CD4-positive, alpha-beta memory T cell (primary cell): ENCODE measurements at regions of chr9 and their contacts with region 1.

Region 1: GRCh38 chr9:34989003-34989945 is at the start of gene DNAJB5:
- DNase-seq: peak; percentile 96 to 99 (median 98)
- H3K4me3 ChIP-seq: peak within 1 kb of the TSS; percentile 47 to 83
- H3K4me3 Mint-ChIP-seq: peak within 1 kb of the TSS; percentile 90 to 99 (median 94)
- H3K27ac ChIP-seq: peak within 1 kb of the TSS; percentile 69
- H3K27ac Mint-ChIP-seq: peak within 1 kb of the TSS; percentile 84 to 95 (median 94)
- H3K4me1 ChIP-seq: peaks cover 42% of the 10 kb centered on the region
- H3K4me1 Mint-ChIP-seq: peaks cover 28 to 62% (median 48%) of the 10 kb centered on the region in 4 donors
- H3K27me3 ChIP-seq: no peaks in the 10 kb centered on the region
- H3K27me3 Mint-ChIP-seq: no peaks in the 10 kb centered on the region
- total RNA-seq, gene DNAJB5: 0.73 to 0.97 TPM

Region 2: DNA sequence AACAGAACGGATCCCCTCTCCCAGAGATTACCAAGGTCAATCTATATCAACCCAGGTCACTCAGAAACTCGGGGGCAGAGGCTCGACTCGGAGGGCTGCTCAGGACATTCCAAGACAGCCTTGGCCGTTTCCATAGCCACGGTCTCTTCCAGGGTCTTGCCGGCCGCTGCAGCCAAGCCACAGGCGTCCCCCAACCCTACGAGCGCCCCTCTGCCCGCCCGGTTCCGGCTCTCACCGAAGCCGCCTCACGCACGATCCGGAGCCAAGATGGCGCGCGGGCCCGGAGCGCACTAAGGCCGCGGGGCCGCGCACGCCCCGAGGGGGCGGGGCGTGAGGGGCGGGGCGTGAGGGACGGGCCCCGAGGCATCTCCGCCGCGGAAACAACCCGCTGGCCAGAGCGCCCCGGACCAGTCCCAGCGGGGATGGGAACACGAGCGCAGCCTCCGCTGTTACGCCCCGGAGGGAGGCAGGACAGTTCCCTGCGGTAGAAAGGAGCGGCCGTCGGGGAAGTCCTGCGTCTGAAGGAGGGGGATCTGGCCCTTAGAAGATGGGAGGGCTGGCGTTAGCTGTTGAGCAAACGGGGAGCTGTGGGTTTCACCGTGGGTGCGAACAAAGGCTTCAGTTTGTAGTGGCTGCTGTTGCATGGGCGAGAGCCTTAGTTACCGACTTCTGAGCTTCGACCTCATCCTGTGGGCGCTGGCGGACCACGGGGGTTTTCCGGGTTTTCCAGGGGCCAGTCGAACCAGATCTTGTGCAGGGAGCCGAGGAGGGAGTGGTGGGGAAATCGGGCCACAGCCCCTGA is 377.2 kb before region 1 on chr9 and contains the start of gene RPP25L:
- CTCF ChIA-PET with region 1: no interaction called
- POLR2A ChIA-PET with region 1: no interaction called
- intact Hi-C with region 1: loop called (anchors 2 kb)
- DNase-seq: peak; percentile 83 to 89 (median 86)
- H3K4me3 ChIP-seq: peak within 1 kb of the TSS; percentile 81 to 88
- H3K4me3 Mint-ChIP-seq: peak within 1 kb of the TSS; percentile 87 to 99 (median 92)
- H3K27ac ChIP-seq: peak within 1 kb of the TSS; percentile 71
- H3K27ac Mint-ChIP-seq: peak within 1 kb of the TSS; percentile 83 to 97 (median 96)
- H3K4me1 ChIP-seq: peaks cover 19% of the 10 kb centered on the region
- H3K4me1 Mint-ChIP-seq: peaks cover 7 to 35% (median 25%) of the 10 kb centered on the region in 4 donors
- H3K27me3 ChIP-seq: no peaks in the 10 kb centered on the region
- H3K27me3 Mint-ChIP-seq: no peaks in the 10 kb centered on the region
- total RNA-seq, gene RPP25L: 28.5 to 28.9 TPM

Region 3: GRCh38 chr9:34637356-34638137 is 351.7 kb before region 1 on chr9 and contains the start of gene SIGMAR1:
- CTCF ChIA-PET with region 1: no interaction called
- POLR2A ChIA-PET with region 1: no interaction called
- intact Hi-C with region 1: no loop called
- DNase-seq: peak; percentile 91 to 97 (median 94)
- H3K4me3 ChIP-seq: peak within 1 kb of the TSS; percentile 74 to 84
- H3K4me3 Mint-ChIP-seq: peak within 1 kb of the TSS; percentile 87 to 92 (median 91)
- H3K27ac ChIP-seq: peak within 1 kb of the TSS; percentile 78
- H3K27ac Mint-ChIP-seq: peak within 1 kb of the TSS; percentile 93 to 97 (median 95)
- H3K4me1 ChIP-seq: peaks cover 38% of the 10 kb centered on the region
- H3K4me1 Mint-ChIP-seq: peaks cover 22 to 51% (median 34%) of the 10 kb centered on the region in 4 donors
- H3K27me3 ChIP-seq: no peaks in the 10 kb centered on the region
- H3K27me3 Mint-ChIP-seq: no peaks in the 10 kb centered on the region
- total RNA-seq, gene SIGMAR1: 56.1 to 59.5 TPM

Region 4: GRCh38 chr9:34899535-34900158 is 89.6 kb before region 1 on chr9:
- CTCF ChIA-PET with region 1: interaction called, 64 read pairs
- POLR2A ChIA-PET with region 1: interaction called, 10 read pairs
- intact Hi-C with region 1: loop called (anchors 1 kb)
- DNase-seq: peak; percentile 73 to 78 (median 77)
- H3K4me3 ChIP-seq: no peak overlapping the region
- H3K4me3 Mint-ChIP-seq: no peak overlapping the region
- H3K27ac ChIP-seq: no peak overlapping the region
- H3K27ac Mint-ChIP-seq: no peak overlapping the region
- H3K4me1 ChIP-seq: no peaks in the 10 kb centered on the region
- H3K4me1 Mint-ChIP-seq: no peaks in the 10 kb centered on the region
- H3K27me3 ChIP-seq: no peaks in the 10 kb centered on the region
- H3K27me3 Mint-ChIP-seq: peaks cover 29 to 30% of the 10 kb centered on the region in 2 donors

Region 5: GRCh38 chr9:35071814-35072460 is 82.7 kb after region 1 on chr9:
- CTCF ChIA-PET with region 1: interaction called, 3 read pairs
- POLR2A ChIA-PET with region 1: interaction called, 19 read pairs
- intact Hi-C with region 1: loop called (anchors 1 kb)
- DNase-seq: peak; percentile 72 to 80 (median 79)
- H3K4me3 ChIP-seq: peak overlapping the region; percentile 82 to 83
- H3K4me3 Mint-ChIP-seq: peak overlapping the region; percentile 81 to 95 (median 92)
- H3K27ac ChIP-seq: peak overlapping the region; percentile 94
- H3K27ac Mint-ChIP-seq: peak overlapping the region; percentile 81 to 100 (median 97)
- H3K4me1 ChIP-seq: peaks cover 52% of the 10 kb centered on the region
- H3K4me1 Mint-ChIP-seq: peaks cover 41 to 59% (median 51%) of the 10 kb centered on the region in 4 donors
- H3K27me3 ChIP-seq: no peaks in the 10 kb centered on the region
- H3K27me3 Mint-ChIP-seq: no peaks in the 10 kb centered on the region

Region 6: DNA sequence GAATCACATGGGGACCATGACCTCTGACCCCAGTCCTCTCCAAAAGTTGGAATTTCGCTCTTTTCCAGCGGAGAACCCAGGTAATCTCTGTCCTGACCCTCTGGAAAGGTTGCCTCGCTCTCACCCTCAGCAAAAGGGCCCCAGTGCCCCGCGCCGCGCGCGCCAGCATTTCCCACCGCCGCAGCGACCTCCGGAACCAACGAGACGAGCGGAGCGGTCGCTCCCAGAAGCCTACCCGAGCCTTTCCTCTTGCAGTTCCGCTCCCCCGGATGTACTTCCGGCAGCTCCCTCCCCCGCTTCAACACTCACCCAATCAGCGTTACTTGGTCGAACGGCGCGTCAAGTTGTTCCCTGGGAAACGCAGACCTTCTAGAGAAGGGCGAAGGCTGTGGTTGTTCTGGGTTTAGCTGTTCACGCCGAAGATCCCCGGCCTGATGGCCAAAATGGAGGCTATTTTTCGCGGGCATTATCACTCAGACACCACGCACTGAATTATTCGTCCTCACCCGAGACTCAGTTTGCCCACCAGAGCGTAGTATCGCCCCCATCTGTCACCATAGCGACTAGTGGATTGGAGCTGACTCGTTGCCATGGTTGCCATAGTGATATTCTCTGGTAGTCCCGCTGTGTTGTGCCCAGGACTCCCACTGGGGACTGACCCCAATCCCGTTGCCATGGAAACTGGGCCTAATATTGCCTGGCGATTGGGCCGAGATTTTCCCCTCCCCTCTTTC is 113.8 kb after region 1 on chr9 and contains the start of gene STOML2:
- CTCF ChIA-PET with region 1: no interaction called
- POLR2A ChIA-PET with region 1: interaction called, 11 read pairs
- intact Hi-C with region 1: no loop called
- DNase-seq: peak; percentile 91 to 96 (median 93)
- H3K4me3 ChIP-seq: peak within 1 kb of the TSS; percentile 83 to 96
- H3K4me3 Mint-ChIP-seq: peak within 1 kb of the TSS; percentile 90 to 98 (median 94)
- H3K27ac ChIP-seq: peak within 1 kb of the TSS; percentile 95
- H3K27ac Mint-ChIP-seq: peak within 1 kb of the TSS; percentile 97 to 100 (median 99)
- H3K4me1 ChIP-seq: peaks cover 23% of the 10 kb centered on the region
- H3K4me1 Mint-ChIP-seq: peaks cover 19 to 46% (median 30%) of the 10 kb centered on the region in 4 donors
- H3K27me3 ChIP-seq: no peaks in the 10 kb centered on the region
- H3K27me3 Mint-ChIP-seq: no peaks in the 10 kb centered on the region
- total RNA-seq, gene STOML2: 42.9 to 45.3 TPM